IMR-90 (cell line): ENCODE measurements at regions of chr6 and their contacts with region 1.

Region 1: GRCh38 chr6:49531774-49532569 is 18.5 kb upstream of the C6orf141 start:
- DNase-seq: peak; percentile 54
- ATAC-seq: peak; percentile 97
- H3K4me3 ChIP-seq: no peak overlapping the region
- H3K27ac ChIP-seq: no peak overlapping the region
- H3K4me1 ChIP-seq: no peaks in the 10 kb centered on the region
- H3K27me3 ChIP-seq: no peaks in the 10 kb centered on the region
- CTCF ChIP-seq: peak; percentile 99
- POLR2A ChIP-seq: no peak
- RAD21 ChIP-seq: peak; percentile 46

Region 2: GRCh38 chr6:49519660-49520059 is 12.3 kb before region 1 on chr6:
- CTCF ChIA-PET with region 1: interaction called, 13 read pairs
- POLR2A ChIA-PET with region 1: no interaction called
- dilution Hi-C with region 1: no loop called
- in situ Hi-C with region 1: no loop called
- intact Hi-C with region 1: no loop called
- DNase-seq: no peak
- ATAC-seq: no peak
- H3K4me3 ChIP-seq: no peak overlapping the region
- H3K27ac ChIP-seq: no peak overlapping the region
- H3K4me1 ChIP-seq: no peaks in the 10 kb centered on the region
- H3K27me3 ChIP-seq: no peaks in the 10 kb centered on the region
- CTCF ChIP-seq: no peak
- POLR2A ChIP-seq: no peak
- RAD21 ChIP-seq: no peak

Region 3: DNA sequence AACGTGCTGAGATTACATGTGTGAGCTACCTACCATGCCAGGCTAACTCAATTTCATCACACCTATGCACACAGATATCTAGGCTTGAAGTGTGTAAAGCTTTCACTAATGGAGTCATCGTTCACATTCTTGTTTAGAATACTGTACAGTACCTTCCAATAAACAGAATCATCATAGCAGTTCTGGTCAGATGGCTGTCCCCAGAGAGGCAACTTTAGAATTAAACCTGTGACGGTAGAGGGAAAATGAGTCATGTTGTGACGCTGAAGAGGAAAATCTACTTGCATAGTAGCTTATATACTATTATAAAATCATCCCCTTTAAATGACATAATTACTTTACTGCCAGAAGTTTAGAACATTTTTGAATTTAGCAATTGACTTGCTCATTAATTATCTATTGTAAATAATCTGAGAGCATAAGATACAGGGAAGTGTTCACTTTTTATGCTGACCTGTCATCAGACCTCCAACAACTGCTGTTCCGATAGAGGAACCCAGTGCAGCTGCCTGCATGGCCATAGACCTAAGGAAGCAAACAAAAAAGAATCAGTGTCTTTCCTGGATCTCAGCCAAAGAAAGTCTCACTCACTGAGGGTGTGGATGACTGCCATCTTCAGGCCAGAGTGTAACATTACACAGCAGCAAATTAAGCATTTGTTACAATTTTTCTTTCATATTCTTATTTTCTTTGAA is 74.9 kb after region 1 on chr6:
- CTCF ChIA-PET with region 1: interaction called, 14 read pairs
- POLR2A ChIA-PET with region 1: no interaction called
- dilution Hi-C with region 1: no loop called
- in situ Hi-C with region 1: loop called (anchors 10 kb)
- intact Hi-C with region 1: loop called (anchors 1 kb)
- DNase-seq: peak; percentile 80
- ATAC-seq: peak; percentile 97
- H3K4me3 ChIP-seq: no peak overlapping the region
- H3K27ac ChIP-seq: no peak overlapping the region
- H3K4me1 ChIP-seq: no peaks in the 10 kb centered on the region
- H3K27me3 ChIP-seq: no peaks in the 10 kb centered on the region
- CTCF ChIP-seq: peak; percentile 83
- POLR2A ChIP-seq: no peak
- RAD21 ChIP-seq: peak; percentile 59

Region 4: DNA sequence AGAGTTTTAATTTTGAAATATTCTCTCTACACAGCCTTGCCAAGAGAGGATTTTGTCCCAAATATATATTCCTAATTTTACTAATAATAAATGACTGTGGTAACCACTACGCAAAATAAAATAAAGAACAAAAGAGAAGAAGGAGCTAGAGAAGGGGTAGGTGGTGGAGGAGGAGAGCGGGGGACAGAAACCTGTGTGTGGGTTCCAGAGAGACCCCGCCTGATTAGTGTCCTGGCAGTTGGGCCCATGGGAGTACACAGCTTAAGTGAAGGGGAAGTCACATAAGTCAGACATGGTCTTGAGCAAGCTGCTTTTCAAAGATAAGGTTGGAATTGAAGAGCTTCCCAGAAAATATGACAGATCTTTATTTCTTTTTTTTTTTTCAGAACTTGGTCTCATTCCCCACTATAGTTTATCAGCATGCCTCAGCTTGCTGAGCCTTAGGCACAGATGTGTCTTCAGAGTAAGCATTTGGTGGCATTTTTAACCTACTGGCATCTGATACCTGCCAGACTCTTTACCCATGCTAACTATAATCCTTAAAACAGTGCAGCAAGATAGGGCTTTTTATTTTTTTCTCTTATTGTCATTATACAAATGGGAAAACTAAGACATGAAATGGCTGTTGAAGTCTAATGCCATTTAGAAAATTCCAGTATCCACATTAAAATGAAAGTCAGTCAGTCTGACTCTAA is 114.3 kb after region 1 on chr6:
- CTCF ChIA-PET with region 1: no interaction called
- POLR2A ChIA-PET with region 1: no interaction called
- dilution Hi-C with region 1: no loop called
- in situ Hi-C with region 1: no loop called
- intact Hi-C with region 1: no loop called
- DNase-seq: no peak
- ATAC-seq: no peak
- H3K4me3 ChIP-seq: no peak overlapping the region
- H3K27ac ChIP-seq: no peak overlapping the region
- H3K4me1 ChIP-seq: no peaks in the 10 kb centered on the region
- H3K27me3 ChIP-seq: no peaks in the 10 kb centered on the region
- CTCF ChIP-seq: no peak
- POLR2A ChIP-seq: no peak
- RAD21 ChIP-seq: no peak

Region 5: GRCh38 chr6:49849213-49849907 is 317.4 kb after region 1 on chr6:
- CTCF ChIA-PET with region 1: interaction called, 3 read pairs
- POLR2A ChIA-PET with region 1: no interaction called
- dilution Hi-C with region 1: no loop called
- in situ Hi-C with region 1: loop called (anchors 25 kb)
- intact Hi-C with region 1: loop called (anchors 2 kb)
- DNase-seq: peak; percentile 55
- ATAC-seq: peak; percentile 80
- H3K4me3 ChIP-seq: no peak overlapping the region
- H3K27ac ChIP-seq: no peak overlapping the region
- H3K4me1 ChIP-seq: no peaks in the 10 kb centered on the region
- H3K27me3 ChIP-seq: no peaks in the 10 kb centered on the region
- CTCF ChIP-seq: peak; percentile 62
- POLR2A ChIP-seq: no peak
- RAD21 ChIP-seq: peak; percentile 48